Thyroid gland (tissue), 4 donors: ENCODE measurements at regions of chr3 and their contacts with region 1.

Region 1: DNA sequence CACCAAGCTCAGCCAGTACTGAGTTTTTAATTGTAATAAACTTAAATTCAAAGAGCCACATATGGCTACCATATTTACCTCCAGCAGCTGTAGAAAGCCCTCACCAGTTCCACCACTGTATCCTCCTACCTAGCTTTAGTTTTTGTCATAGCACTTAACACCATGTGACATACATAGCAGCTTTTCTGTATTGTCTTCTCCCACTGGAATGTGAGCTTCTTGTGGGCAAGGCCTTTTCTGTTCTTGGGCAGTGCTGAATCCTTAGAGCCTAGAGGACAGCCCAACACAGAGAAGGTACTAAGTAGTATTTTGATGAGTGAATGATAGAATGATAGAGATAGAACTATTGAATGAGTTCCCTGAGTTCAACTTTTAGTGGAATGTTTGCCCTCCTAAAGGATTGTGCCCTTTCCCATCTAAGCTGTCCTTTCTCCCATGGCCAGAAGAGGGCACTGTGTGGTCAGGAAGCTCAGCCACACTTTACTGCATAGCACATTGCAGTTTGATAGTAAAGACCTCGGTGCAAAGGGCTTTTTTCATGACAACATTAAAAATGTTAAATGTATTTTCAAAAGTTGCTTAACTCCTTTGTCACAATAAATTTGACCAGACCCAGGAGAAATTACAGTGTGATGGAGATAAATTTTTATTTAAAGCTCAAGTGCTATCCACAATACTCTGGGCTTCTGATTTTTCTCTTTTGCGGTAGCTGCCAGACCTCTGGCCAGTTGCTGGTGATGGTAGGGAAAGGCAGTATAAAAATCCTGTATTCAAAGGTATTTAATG is 115.8 kb downstream of the GHSR start:
- DNase-seq: peak; percentile 64 to 66
- H3K4me3 ChIP-seq: no peak overlapping the region
- H3K27ac ChIP-seq: peak overlapping the region in 1 of 3 donors; percentile 2
- H3K4me1 ChIP-seq: no peaks in the 10 kb centered on the region
- H3K27me3 ChIP-seq: no peaks in the 10 kb centered on the region
- CTCF ChIP-seq: peak; percentile 74 to 90 (median 84)
- POLR2A ChIP-seq: no peak

Region 2: DNA sequence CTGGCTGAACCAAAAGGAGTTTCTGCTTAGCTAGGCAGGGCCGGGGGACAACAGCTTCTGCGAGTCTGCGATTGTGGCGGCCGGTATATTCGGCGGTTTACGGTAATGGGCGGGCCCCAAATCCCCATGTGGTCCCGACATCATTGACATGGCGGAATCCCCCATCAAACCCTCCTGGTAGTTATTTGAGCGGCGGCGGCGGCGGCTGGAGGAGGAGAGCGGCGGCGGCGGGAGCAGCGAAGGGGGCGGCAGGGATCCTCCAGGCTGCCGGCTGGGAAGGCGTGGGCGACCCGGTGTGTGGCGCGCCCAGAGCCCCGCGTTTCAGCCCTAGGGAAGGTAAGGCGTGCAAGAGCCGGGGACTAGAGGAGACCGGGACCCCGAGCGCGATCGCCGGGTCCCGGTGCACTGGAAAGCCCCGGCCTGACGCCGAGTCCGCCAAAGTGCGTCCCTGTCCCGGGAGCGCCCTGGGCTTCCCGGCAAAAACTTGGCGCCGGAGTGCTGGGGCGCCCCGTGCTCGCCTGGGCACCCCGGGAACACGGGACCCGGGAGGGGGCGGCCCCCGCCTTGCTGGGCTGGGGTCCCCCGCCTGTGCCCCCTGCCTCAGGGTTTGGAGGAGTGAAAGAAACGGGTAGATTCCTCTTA is 292.9 kb before region 1 on chr3 and contains the start of gene FNDC3B:
- intact Hi-C with region 1: loop called (anchors 5 kb)
- DNase-seq: peak; percentile 95
- H3K4me3 ChIP-seq: peak within 1 kb of the TSS; percentile 87 to 96 (median 94)
- H3K27ac ChIP-seq: peak within 1 kb of the TSS; percentile 94 to 98 (median 94)
- H3K4me1 ChIP-seq: peaks cover 8 to 25% of the 10 kb centered on the region in 2 donors
- H3K27me3 ChIP-seq: no peaks in the 10 kb centered on the region
- CTCF ChIP-seq: peak in 1 of 6 experiments; percentile 7
- POLR2A ChIP-seq: peak; percentile 48 to 97
- total RNA-seq, gene FNDC3B: 118 to 172 (median 146) TPM

Region 3: GRCh38 chr3:172522871-172523818 is 190.7 kb after region 1 on chr3 and contains the start of gene TNFSF10:
- intact Hi-C with region 1: no loop called
- DNase-seq: peak; percentile 55 to 63
- H3K4me3 ChIP-seq: peak within 1 kb of the TSS; percentile 20 to 42 (median 24)
- H3K27ac ChIP-seq: peak within 1 kb of the TSS; percentile 54 to 78 (median 73)
- H3K4me1 ChIP-seq: peaks cover 5 to 8% of the 10 kb centered on the region in 2 donors
- H3K27me3 ChIP-seq: no peaks in the 10 kb centered on the region
- CTCF ChIP-seq: no peak
- POLR2A ChIP-seq: peak in 1 of 2 donors; percentile 61
- total RNA-seq, gene TNFSF10: 24.4 to 178 (median 61.7) TPM

Region 4: GRCh38 chr3:172750368-172751174 is 418.1 kb after region 1 on chr3 and contains the start of gene ECT2:
- intact Hi-C with region 1: no loop called
- DNase-seq: peak; percentile 99
- H3K4me3 ChIP-seq: peak within 1 kb of the TSS; percentile 57 to 74 (median 63)
- H3K27ac ChIP-seq: peak within 1 kb of the TSS; percentile 6 to 57 (median 18)
- H3K4me1 ChIP-seq: peaks cover 5 to 6% of the 10 kb centered on the region in 2 donors
- H3K27me3 ChIP-seq: no peaks in the 10 kb centered on the region
- CTCF ChIP-seq: peak in 5 of 6 experiments; percentile 41 to 73 (median 67)
- POLR2A ChIP-seq: peak in 1 of 2 donors; percentile 27
- total RNA-seq, gene ECT2: 6.8 to 10.7 (median 7.2) TPM

Region 5: DNA sequence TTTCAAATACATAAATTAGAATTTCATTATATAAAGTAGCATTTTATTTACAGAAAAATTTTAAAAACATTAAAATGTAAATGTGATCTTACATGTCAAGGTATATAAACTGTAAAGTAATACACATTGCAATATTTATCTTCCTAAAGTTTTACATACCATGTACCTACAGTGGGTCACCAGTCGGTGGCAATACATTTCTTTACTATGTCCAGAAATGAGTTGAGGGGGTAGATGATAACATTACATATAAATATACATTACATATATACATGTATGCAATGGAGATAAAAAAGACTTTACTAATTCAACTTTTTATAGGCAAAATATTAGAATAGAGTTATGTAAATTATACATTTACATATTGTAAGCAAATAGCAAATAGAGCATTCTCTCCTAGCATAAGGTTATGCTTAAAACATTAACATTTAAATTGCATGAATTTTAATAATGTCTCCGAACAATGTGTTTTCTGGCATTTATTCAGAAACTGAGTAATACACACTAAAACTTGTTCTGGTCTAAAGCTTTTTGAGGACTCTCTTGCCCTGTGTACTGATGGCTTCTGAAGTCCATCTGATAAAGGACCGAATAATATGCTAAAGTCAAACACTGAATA is 971.8 kb after region 1 on chr3:
- intact Hi-C with region 1: no loop called
- DNase-seq: no peak
- H3K4me3 ChIP-seq: no peak overlapping the region
- H3K27ac ChIP-seq: no peak overlapping the region
- H3K4me1 ChIP-seq: no peaks in the 10 kb centered on the region
- H3K27me3 ChIP-seq: no peaks in the 10 kb centered on the region
- CTCF ChIP-seq: no peak
- POLR2A ChIP-seq: no peak